Gastrocnemius medialis (tissue), 4 donors: ENCODE measurements at regions of chr3 and their contacts with region 1.

Region 1: DNA sequence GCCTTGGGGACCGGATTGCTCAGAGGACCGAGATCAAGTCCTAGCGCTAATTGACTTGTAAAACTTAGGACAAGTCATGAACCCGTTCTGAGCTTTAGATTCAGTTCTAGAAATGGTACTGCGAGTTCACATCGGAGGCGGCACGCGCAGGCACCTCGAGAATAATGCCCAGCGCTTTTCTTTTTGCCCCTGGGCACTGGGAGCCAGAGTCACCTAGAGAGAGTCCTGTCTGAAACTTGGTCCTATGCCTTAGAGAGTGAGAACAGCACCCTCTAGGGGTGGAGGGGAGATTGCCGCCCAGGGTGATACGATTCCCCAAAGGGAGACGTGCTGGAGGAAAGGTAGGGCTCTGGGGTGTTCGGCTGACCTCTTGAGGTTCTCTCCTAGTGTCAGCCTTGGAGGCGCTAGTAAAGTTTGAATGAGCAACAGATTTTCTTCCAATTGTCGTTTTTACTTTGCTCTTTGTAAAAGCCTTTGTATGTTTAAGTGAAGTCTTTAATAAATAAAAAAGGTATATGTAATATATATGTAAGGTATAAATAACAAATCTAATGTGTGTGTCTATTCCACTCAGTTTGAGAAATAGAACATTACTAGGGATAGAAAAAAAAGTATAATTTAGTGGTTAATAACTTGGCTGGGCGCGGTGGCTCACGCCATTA is 826 bp downstream of the EEF1AKMT4 start:
- DNase-seq: peak; percentile 59 to 85
- ATAC-seq: peak; percentile 80 to 82
- H3K4me3 ChIP-seq: peak overlapping the region; percentile 85 to 95 (median 90)
- H3K27ac ChIP-seq: peak overlapping the region; percentile 91 to 95 (median 94)
- H3K4me1 ChIP-seq: peaks cover 17 to 20% of the 10 kb centered on the region in 2 donors
- H3K27me3 ChIP-seq: no peaks in the 10 kb centered on the region
- CTCF ChIP-seq: peak; percentile 81 to 94 (median 88)
- POLR2A ChIP-seq: no peak

Region 2: DNA sequence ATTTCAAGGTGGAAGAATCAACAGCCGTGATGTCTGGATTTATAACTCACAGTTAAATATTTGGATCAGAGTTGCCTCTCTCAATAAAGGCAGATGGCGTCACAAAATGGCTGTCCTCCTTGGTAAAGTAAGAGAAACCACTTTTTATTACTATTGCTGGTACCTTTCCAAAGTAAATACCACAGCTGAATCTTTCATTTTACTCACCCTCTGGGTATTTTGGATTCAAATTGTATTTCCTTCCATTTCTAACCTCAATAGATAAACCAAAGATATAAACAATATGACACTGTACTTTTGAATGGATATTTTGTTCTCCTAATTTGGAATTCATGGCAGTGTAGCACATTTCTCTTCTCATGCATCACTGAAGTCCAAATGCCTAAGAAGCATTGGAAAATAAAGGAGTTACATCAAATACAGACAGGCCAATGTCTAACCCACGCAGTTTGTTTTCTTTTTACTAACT is 585.4 kb before region 1 on chr3:
- in situ Hi-C with region 1: no loop called
- intact Hi-C with region 1: no loop called
- DNase-seq: no peak
- ATAC-seq: no peak
- H3K4me3 ChIP-seq: no peak overlapping the region
- H3K27ac ChIP-seq: no peak overlapping the region
- H3K4me1 ChIP-seq: peaks cover 23 to 30% of the 10 kb centered on the region in 2 donors
- H3K27me3 ChIP-seq: no peaks in the 10 kb centered on the region
- CTCF ChIP-seq: no peak
- POLR2A ChIP-seq: no peak

Region 3: GRCh38 chr3:183884427-183885296 is 365.6 kb before region 1 on chr3 and contains the start of gene PARL:
- in situ Hi-C with region 1: loop called in 2 of 4 experiments (anchors 25 kb)
- intact Hi-C with region 1: loop called (anchors 2 kb)
- DNase-seq: peak; percentile 93 to 94
- ATAC-seq: peak; percentile 98 to 99
- H3K4me3 ChIP-seq: peak within 1 kb of the TSS; percentile 83 to 96 (median 92)
- H3K27ac ChIP-seq: peak within 1 kb of the TSS; percentile 77 to 90 (median 88)
- H3K4me1 ChIP-seq: peaks cover 20 to 23% of the 10 kb centered on the region in 2 donors
- H3K27me3 ChIP-seq: no peaks in the 10 kb centered on the region
- CTCF ChIP-seq: peak; percentile 93 to 96 (median 96)
- POLR2A ChIP-seq: peak; percentile 43 to 72
- total RNA-seq, gene PARL: 30.5 to 49.5 (median 41.3) TPM

Region 4: DNA sequence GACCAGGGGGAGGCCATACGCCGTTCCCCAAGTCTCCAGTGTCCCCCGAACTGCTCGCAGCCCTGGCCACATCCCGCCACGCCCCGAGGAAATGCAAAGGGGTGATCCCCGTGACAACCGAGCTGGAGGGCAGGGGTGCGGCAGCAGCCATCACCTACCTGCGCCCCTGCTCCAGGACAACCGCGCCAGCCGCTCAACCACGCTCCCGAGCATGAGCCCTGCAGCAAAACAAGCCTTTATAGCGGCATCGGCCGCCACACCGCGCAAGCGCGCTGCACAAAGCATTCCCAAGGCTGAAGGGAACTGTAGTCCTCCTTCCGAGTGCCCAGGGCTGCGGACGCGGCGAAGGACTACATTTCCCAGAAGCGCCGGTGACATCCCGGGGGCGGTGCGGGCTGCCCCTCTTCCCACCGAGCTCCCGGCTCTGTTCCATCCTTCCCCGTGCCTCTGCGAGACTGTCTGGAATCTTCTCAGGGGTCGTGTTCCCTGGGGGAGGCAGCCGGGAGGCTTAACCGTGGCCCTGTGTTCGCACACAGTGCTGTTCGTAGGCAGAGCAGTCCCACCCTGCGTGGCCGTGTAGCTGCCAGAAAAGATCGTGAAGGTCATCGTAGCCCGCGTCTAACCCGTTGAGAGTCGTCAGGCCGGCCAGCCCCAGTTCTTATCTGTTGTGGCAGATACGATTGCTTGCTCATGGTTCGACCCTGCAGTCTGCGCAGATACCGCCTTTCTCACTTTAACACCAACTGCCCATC is 232.4 kb before region 1 on chr3 and contains the start of gene ABCC5:
- in situ Hi-C with region 1: no loop called
- intact Hi-C with region 1: loop called (anchors 1 kb)
- DNase-seq: peak; percentile 92 to 93
- ATAC-seq: peak; percentile 87 to 88
- H3K4me3 ChIP-seq: peak within 1 kb of the TSS; percentile 98 to 100 (median 100)
- H3K27ac ChIP-seq: peak within 1 kb of the TSS; percentile 87 to 98 (median 92)
- H3K4me1 ChIP-seq: peaks cover 19 to 37% of the 10 kb centered on the region in 2 donors
- H3K27me3 ChIP-seq: no peaks in the 10 kb centered on the region
- CTCF ChIP-seq: peak in 3 of 5 experiments; percentile 42 to 56 (median 52)
- POLR2A ChIP-seq: peak; percentile 65 to 88
- total RNA-seq, gene ABCC5: 20.4 to 52.2 (median 39.5) TPM

Region 5: GRCh38 chr3:184145111-184145524 is 105.2 kb before region 1 on chr3:
- in situ Hi-C with region 1: loop called in 2 of 4 experiments (anchors 10 to 25 kb)
- intact Hi-C with region 1: loop called (anchors 2 kb)
- DNase-seq: peak; percentile 38 to 61
- ATAC-seq: peak; percentile 73 to 81
- H3K4me3 ChIP-seq: no peak overlapping the region
- H3K27ac ChIP-seq: peak overlapping the region; percentile 61 to 80 (median 72)
- H3K4me1 ChIP-seq: peaks cover 23 to 33% of the 10 kb centered on the region in 2 donors
- H3K27me3 ChIP-seq: no peaks in the 10 kb centered on the region
- CTCF ChIP-seq: peak in 4 of 5 experiments; percentile 35 to 59 (median 53)
- POLR2A ChIP-seq: no peak

Region 6: DNA sequence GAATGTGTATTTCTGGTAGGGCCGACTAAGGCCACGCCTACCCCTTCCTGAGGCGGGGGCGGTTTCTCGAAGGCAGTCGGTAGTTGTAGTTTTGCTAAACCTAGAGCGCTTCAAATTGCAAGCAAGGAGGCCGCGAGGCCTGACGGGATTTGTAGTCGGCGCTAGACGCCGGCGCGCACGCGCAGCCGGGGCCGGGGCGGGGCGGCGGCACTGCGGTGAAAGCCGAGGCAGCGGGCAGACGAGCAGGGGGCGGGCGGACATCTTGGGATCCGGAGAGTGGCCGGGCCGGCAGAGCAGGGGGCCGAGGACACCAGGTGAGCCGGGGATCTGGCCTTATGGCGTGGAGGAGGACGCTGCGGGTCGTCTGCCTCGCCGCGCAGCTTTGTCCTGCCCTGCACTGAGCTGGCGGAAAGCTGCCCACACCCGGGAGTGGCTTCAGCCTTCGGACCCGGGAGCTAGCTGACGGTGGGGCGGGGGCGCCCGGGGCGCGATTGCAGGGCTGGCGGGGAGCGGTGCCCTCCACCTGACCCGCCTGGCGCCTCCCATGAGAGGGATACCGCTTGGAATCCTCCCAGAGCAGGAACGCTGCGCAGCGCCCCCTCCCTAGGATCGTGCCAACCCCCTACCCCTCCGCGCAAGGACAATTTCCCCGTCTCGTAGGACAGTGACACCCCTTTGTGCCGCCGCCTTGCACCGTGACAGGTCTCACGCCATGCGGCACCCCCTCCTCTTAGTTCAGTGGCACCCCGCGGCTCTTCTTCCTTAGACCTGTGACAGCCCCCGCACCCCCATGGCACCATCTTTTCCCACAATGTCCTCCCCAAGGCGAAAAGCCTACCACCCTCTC is 75.4 kb before region 1 on chr3 and contains the start of gene AP2M1:
- in situ Hi-C with region 1: no loop called
- intact Hi-C with region 1: loop called (anchors 5 kb)
- DNase-seq: peak; percentile 98 to 100
- ATAC-seq: peak; percentile 94 to 96
- H3K4me3 ChIP-seq: peak within 1 kb of the TSS; percentile 95 to 98 (median 96)
- H3K27ac ChIP-seq: peak within 1 kb of the TSS; percentile 97 to 99 (median 98)
- H3K4me1 ChIP-seq: peaks cover 29 to 39% of the 10 kb centered on the region in 2 donors
- H3K27me3 ChIP-seq: no peaks in the 10 kb centered on the region
- CTCF ChIP-seq: peak in 1 of 5 experiments; percentile 14
- POLR2A ChIP-seq: peak; percentile 88 to 90
- total RNA-seq, gene AP2M1: 110 to 132 (median 117) TPM

Region 7: DNA sequence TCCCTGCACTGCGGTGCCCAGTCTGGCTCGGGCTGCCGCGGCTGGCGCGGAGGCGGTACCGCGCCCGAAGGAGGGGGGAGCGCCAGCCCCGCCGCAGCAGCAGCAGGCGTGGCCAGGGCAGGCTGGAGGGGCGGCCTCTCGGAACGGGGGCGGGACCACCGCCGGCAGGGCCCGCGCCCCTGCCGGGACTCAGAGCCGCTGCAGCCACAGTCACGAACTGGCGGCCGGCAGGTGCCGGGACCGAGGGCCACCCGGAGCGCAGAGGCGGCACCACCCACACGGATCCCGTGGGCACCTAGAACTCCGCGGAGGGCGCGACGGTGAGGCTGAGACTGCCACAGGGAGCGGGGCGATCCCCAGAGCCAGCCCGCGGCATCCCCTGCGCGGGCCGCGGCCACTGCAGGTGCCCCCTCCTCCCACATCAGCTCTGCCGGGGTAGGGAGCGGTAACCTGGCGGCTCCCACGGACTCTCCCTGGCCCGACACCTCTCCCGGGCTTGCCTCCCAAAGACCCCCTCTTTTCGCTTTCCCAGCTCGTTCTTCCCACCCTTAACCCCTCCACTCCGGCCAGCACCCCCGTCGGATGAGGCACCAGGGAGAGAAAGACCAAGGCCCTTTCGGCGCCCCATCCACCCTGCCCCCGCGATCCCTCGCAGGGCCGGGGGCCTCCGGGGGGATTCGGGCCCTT is 20.8 kb before region 1 on chr3 and contains the start of gene VWA5B2:
- in situ Hi-C with region 1: no loop called
- intact Hi-C with region 1: loop called (anchors 2 kb)
- DNase-seq: no peak
- ATAC-seq: peak; percentile 18 to 29
- H3K4me3 ChIP-seq: peak within 1 kb of the TSS; percentile 29 to 60 (median 52)
- H3K27ac ChIP-seq: no peak within 1 kb of the TSS
- H3K4me1 ChIP-seq: peaks cover 4 to 9% of the 10 kb centered on the region in 2 donors
- H3K27me3 ChIP-seq: peaks cover 33 to 45% (median 36%) of the 10 kb centered on the region in 3 donors
- CTCF ChIP-seq: peak in 2 of 5 experiments; percentile 24 to 32
- POLR2A ChIP-seq: no peak
- total RNA-seq, gene VWA5B2: not detected

Region 8: DNA sequence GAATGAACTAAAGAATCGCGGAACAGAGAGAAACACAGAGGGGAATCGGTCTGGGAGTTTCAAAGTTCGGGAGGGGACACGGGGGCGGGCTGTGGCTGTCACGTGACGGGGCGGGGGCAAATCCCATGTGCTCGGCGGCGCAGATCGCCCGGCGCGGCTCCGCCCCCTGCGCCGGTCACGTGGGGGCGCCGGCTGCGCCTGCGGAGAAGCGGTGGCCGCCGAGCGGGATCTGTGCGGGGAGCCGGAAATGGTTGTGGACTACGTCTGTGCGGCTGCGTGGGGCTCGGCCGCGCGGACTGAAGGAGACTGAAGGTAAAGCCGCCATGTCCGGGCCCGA is 64.0 kb after region 1 on chr3 and contains the start of gene EIF4G1:
- in situ Hi-C with region 1: no loop called
- intact Hi-C with region 1: loop called (anchors 2 kb)
- DNase-seq: peak; percentile 94
- ATAC-seq: peak; percentile 76 to 84
- H3K4me3 ChIP-seq: peak within 1 kb of the TSS; percentile 73 to 94 (median 90)
- H3K27ac ChIP-seq: peak within 1 kb of the TSS; percentile 92 to 100 (median 98)
- H3K4me1 ChIP-seq: peaks cover 38 to 45% of the 10 kb centered on the region in 2 donors
- H3K27me3 ChIP-seq: no peaks in the 10 kb centered on the region
- CTCF ChIP-seq: no peak
- POLR2A ChIP-seq: peak; percentile 66 to 74
- total RNA-seq, gene EIF4G1: 474 to 863 (median 735) TPM